ENCODE measurements at regions of chr1 and their contacts with region 1.

Region 1: DNA sequence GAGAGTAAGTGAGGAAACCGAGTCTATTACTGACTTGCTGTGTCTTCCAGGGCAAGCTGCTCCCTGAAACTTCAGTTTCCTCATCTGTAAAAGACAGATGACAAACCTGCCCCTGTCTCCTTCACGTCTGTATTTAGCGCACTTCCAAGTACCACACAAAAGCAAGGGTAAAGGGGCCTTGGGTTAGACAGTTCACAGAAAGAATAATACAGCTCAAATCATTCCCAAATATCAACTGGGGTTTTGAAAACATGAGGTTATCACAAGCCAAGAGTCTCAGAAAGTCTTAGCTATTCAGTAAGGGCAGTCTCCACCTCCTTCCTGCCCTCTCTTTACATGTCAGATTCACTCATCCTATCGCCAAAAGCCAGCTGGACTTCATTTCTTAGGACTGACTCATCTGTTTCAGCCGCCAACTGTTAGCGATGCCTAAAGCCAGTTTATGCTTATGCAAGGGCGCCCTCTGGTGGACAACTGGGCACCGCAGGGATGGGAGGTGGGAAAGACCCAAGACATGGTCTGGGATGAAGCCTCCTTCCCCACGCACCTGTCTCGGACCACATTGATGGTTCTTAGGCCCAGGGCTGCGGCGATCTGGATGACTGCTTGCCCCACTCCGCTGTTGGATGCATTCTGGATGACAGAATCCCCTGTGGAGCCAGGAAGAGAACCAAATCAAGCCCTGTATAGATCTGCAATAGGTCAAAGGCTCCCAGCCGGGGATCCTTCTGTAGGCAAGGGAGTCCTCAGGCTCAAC is 21.1 kb upstream of the SRSF4 start:
- DNase-seq: peak; percentile 88 to 90
- ATAC-seq: peak; percentile 96 to 99
- H3K4me3 ChIP-seq: no peak overlapping the region
- H3K27ac ChIP-seq: peak overlapping the region in 1 of 2 experiments; percentile 65; a peak in 3 of 6 replicates
- H3K4me1 ChIP-seq: peaks cover 6% of the 10 kb centered on the region
- CTCF ChIP-seq: peak; percentile 80
- EP300 ChIP-seq: no peak
- POLR2A ChIP-seq: no peak
- RAD21 ChIP-seq: peak; percentile 83 to 91

Region 2: DNA sequence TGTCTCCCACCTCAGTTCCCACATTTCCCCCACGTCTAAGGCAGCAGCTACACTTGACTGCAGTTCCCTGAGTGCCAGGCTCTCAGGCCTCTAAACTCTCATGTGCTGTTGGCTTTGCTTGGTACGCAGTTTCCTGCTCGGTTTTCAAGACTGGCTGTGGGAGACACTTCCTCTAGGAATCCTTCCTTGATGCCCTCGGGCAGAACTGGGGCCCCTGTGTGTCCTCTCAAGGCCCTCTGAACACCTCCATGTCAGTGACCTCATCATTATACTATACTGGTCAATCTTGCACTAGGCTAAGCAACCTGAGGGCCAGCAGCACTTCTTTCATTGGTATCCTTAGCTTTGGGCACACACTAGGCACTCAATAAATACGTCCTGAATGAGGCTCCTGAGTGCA is 10.5 kb before region 1 on chr1:
- CTCF ChIA-PET with region 1: interaction called, 17 read pairs
- POLR2A ChIA-PET with region 1: no interaction called
- DNase-seq: no peak
- ATAC-seq: no peak
- H3K4me3 ChIP-seq: no peak overlapping the region
- H3K27ac ChIP-seq: no peak overlapping the region
- H3K4me1 ChIP-seq: peaks cover 4% of the 10 kb centered on the region; the same call in 1 of the 3 replicates
- CTCF ChIP-seq: no peak
- EP300 ChIP-seq: no peak
- POLR2A ChIP-seq: no peak
- RAD21 ChIP-seq: no peak

Region 3: DNA sequence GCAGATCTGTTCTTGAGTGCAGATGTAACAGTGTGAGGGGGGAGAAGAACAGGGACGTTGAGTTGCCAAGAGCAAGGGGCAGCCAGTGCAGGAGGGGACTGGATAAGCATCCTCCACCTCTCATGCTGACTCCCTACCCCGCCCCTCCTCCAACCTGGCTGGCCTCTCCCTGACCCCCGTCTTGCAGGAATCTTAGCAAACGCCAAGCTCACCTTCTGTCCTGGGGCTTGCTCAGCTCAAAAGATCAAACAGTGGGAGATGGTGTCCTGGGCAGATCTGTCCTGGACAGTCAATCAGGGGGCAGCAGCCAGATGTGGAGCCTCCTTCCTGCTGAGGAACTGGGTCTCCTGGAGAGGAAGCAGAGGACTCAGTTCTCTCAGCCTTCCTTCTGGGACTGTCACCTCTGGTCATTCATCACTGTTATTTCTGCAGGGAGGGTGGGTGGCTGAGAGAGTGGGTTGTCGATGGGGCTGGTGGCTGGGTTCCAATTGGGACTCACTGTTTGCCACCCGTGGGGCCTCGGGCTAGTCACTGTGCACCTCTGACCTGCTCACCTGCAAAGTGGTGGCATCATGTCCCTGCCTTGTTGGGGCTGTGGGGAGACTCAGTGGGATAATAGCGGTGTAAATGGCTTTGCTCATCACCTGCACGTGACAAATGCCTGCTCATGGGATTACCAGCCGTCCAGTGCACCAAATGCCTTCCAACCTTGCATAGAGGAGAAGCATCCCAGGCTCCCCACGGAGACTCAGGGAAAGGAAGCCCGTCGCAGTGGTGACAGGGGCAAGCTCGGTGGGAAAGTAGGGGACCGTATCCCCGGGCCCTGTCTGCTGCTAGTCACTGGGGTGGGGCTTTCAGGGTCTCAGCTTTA is 188.0 kb after region 1 on chr1:
- CTCF ChIA-PET with region 1: no interaction called
- POLR2A ChIA-PET with region 1: no interaction called
- DNase-seq: no peak
- ATAC-seq: no peak; a peak in 1 of 6 replicates
- H3K4me3 ChIP-seq: no peak overlapping the region
- H3K27ac ChIP-seq: no peak overlapping the region
- H3K4me1 ChIP-seq: no peaks in the 10 kb centered on the region
- CTCF ChIP-seq: no peak
- EP300 ChIP-seq: no peak
- POLR2A ChIP-seq: no peak
- RAD21 ChIP-seq: no peak